ENCODE measurements at regions of chr6 and their contacts with region 1.

Region 1: GRCh38 chr6:21935561-21936028 is 342.0 kb downstream of the SOX4 start:
- DNase-seq: peak in 1 of 2 experiments; percentile 29
- H3K4me3 ChIP-seq: no peak overlapping the region
- H3K27ac ChIP-seq: no peak overlapping the region
- H3K4me1 ChIP-seq: no peaks in the 10 kb centered on the region
- H3K27me3 ChIP-seq: no peaks in the 10 kb centered on the region
- CTCF ChIP-seq: peak; percentile 74

Region 2: DNA sequence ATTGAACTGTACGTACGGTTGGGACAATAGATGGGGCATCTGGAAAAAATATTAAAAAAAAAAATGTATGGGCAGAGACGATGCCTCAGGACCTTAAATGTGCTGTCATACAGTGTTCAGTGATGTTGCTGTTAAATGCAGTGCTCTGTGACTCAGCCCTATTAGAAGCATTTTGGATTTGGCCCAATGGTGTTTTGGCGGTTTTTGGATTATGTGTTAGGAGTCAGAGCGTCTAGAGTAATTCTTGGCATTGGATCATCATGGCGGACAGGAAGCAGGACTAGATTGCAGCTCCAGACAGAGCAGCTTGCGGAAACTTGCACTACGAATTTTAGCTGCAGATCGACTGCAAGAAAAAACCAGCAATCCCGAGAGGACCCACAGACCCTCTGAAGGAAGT is 62.0 kb before region 1 on chr6:
- CTCF ChIA-PET with region 1: no interaction called
- POLR2A ChIA-PET with region 1: no interaction called
- intact Hi-C with region 1: no loop called
- DNase-seq: no peak
- H3K4me3 ChIP-seq: no peak overlapping the region
- H3K27ac ChIP-seq: no peak overlapping the region
- H3K4me1 ChIP-seq: no peaks in the 10 kb centered on the region; the same call in 1 of the 2 replicates
- H3K27me3 ChIP-seq: no peaks in the 10 kb centered on the region
- CTCF ChIP-seq: no peak

Region 3: GRCh38 chr6:21958428-21958827 is 22.8 kb after region 1 on chr6:
- CTCF ChIA-PET with region 1: no interaction called
- POLR2A ChIA-PET with region 1: interaction called, 11 read pairs
- intact Hi-C with region 1: no loop called
- DNase-seq: no peak
- H3K4me3 ChIP-seq: no peak overlapping the region
- H3K27ac ChIP-seq: no peak overlapping the region
- H3K4me1 ChIP-seq: no peaks in the 10 kb centered on the region
- H3K27me3 ChIP-seq: no peaks in the 10 kb centered on the region
- CTCF ChIP-seq: no peak

Measured in PC-9 (cell line).